ENCODE measurements at regions of chr9 and their contacts with region 1.

Region 1: GRCh38 chr9:2087500-2088313 is 72.6 kb downstream of the SMARCA2 start:
- DNase-seq: no peak
- ATAC-seq: peak in 2 of 8 donors; percentile 30 to 49
- H3K4me3 ChIP-seq: no peak overlapping the region
- H3K27ac ChIP-seq: no peak overlapping the region
- H3K4me1 ChIP-seq: peaks cover 0 to 19% (median 13%) of the 10 kb centered on the region in 9 donors
- H3K27me3 ChIP-seq: no peaks in the 10 kb centered on the region
- CTCF ChIP-seq: peak; percentile 25 to 68 (median 59)

Region 2: GRCh38 chr9:1712861-1713450 is 374.8 kb before region 1 on chr9:
- intact Hi-C with region 1: loop called in 1 of 10 experiments (anchors 5 kb)
- DNase-seq: no peak
- ATAC-seq: no peak
- H3K4me3 ChIP-seq: no peak overlapping the region
- H3K27ac ChIP-seq: no peak overlapping the region
- H3K4me1 ChIP-seq: no peaks in the 10 kb centered on the region
- H3K27me3 ChIP-seq: peaks cover 0 to 9% (median 0%) of the 10 kb centered on the region in 7 donors
- CTCF ChIP-seq: no peak

Region 3: DNA sequence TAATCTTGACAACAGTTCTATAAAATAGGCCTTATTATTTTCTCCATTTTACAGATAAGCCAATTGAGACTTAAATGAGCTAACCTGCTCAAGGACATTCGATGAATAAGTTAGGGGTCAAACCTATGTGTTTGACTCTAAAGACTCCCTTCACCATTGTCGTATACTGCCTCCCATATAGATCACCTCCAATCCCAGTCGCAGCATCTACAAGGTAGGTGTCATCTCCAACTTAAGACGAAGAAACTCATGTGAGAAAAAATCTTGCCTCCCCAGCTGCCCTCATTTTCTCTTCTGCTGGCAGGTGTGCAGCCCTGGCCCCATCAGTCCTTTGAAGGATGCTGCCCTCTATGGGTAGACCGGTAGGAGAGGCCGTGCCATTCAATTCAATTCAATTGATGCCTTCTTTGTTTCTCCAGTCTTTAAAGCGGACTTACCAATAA is 147.8 kb before region 1 on chr9:
- intact Hi-C with region 1: loop called in 2 of 10 experiments (anchors 5 kb)
- DNase-seq: no peak
- ATAC-seq: peak in 1 of 8 donors; percentile 31
- H3K4me3 ChIP-seq: no peak overlapping the region
- H3K27ac ChIP-seq: no peak overlapping the region
- H3K4me1 ChIP-seq: no peaks in the 10 kb centered on the region
- H3K27me3 ChIP-seq: peaks cover 0 to 7% (median 0%) of the 10 kb centered on the region in 7 donors
- CTCF ChIP-seq: peak in 8 of 9 donors; percentile 26 to 63 (median 56)